Activated naive CD4-positive, alpha-beta T cell treated with anti-CD3 and anti-CD28 coated beads for 36 hours (primary cell): ENCODE measurements at regions of chr5 and their contacts with region 1.

Region 1: DNA sequence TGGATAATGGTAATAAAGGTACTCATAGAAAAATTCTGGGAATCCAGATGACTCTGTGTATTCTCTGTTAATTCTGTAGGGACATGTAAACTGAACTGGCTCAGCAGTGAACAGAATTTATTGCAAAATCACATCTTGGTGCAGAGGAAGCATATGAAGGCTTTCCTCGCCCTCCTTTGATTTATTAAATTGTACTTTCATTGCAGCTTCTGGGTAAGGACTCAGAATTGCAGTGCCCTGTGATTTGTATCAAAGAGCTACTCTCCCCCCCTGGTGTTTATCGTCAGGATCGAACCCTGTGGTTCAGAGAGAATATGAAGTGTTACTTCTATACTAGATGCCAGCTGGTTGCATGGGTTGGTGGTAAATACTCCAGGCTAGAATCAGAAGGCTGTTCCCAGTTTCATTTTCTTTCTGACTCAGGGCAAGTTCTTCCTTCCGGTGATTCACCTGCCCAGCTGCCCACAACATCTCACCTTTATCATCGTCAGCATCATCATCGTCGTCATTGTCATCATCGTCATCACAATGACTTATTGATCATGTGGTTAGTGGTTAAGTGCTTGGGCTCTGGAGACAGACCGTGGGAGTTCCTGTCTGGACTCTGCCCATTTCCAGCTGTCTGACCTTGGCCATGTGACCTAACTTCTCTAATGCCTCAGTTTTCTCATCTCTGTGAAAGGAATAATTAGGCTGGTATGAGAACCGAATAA is 238.8 kb downstream of the ARHGAP26 start:
- DNase-seq: peak; percentile 95
- H3K4me3 Mint-ChIP-seq: no peak overlapping the region
- H3K27ac Mint-ChIP-seq: peak overlapping the region; percentile 85
- H3K4me1 Mint-ChIP-seq: peaks cover 56% of the 10 kb centered on the region
- H3K27me3 Mint-ChIP-seq: no peaks in the 10 kb centered on the region

Region 2: DNA sequence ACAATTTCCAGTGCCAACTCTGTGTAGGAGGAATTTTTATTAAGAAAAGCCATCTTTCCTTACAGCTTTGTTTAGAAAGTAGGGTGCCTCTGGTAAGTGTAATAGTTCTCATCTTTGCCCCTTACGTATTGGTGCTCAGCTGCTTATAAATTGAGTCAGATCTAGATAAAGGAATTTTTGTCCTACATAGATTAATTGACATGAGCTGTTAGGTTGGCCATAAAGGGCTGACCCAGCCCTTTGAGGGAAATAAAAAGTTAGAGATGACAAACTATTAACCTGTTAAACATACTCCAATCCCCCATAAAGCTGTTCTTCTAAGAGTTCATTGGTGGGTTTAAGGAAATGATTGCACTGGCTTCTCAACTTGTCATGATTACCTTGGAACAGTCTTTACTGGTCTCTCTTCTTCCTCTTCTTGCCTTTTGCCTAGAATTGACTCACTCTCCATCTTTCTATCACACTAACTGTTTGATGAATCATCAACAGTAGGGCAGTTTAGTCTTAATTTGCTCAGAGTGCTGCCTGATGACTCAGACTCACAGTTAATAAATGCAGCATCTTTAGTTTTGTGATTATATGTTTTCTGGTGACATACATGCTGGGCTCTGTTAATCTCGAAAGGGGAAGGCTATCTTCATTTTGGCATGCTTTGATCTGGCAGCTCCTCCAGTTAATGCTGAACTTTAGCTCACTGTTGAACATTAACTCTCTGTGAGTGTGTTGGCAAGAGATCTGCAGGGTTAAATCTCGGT is 187.1 kb before region 1 on chr5:
- CTCF ChIA-PET with region 1: no interaction called
- intact Hi-C with region 1: loop called (anchors 1 kb)
- DNase-seq: peak; percentile 49
- H3K4me3 Mint-ChIP-seq: no peak overlapping the region
- H3K27ac Mint-ChIP-seq: peak overlapping the region; percentile 54
- H3K4me1 Mint-ChIP-seq: peaks cover 78% of the 10 kb centered on the region
- H3K27me3 Mint-ChIP-seq: no peaks in the 10 kb centered on the region

Region 3: GRCh38 chr5:143033535-143034250 is 24.7 kb after region 1 on chr5:
- CTCF ChIA-PET with region 1: no interaction called
- intact Hi-C with region 1: loop called (anchors 1 kb)
- DNase-seq: no peak
- H3K4me3 Mint-ChIP-seq: no peak overlapping the region
- H3K27ac Mint-ChIP-seq: no peak overlapping the region
- H3K4me1 Mint-ChIP-seq: peaks cover 75% of the 10 kb centered on the region
- H3K27me3 Mint-ChIP-seq: no peaks in the 10 kb centered on the region

Region 4: DNA sequence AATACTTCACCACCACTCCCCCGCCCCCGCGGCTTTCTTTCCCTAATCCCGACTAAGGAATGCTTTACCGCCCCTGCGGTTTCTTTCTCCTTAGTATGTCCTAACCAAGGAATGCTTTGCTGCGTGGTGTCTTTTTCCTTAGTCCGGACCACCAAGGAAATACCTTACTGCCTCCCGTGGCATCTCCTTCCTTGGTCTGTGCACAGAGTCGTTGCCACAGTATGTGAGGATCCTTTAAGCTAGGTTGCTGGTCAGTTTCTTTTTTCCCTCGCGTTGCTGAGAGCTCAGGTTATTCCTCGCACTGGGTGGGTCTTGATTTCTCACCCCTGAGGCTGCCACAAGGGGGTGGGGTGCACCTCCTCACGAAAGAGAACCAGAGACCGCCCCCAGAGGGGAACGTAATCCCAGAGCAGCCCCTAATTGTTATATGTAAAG is 85.1 kb after region 1 on chr5:
- CTCF ChIA-PET with region 1: no interaction called
- intact Hi-C with region 1: no loop called
- DNase-seq: no peak
- H3K4me3 Mint-ChIP-seq: no peak overlapping the region
- H3K27ac Mint-ChIP-seq: no peak overlapping the region
- H3K4me1 Mint-ChIP-seq: peaks cover 16% of the 10 kb centered on the region
- H3K27me3 Mint-ChIP-seq: no peaks in the 10 kb centered on the region

Region 5: DNA sequence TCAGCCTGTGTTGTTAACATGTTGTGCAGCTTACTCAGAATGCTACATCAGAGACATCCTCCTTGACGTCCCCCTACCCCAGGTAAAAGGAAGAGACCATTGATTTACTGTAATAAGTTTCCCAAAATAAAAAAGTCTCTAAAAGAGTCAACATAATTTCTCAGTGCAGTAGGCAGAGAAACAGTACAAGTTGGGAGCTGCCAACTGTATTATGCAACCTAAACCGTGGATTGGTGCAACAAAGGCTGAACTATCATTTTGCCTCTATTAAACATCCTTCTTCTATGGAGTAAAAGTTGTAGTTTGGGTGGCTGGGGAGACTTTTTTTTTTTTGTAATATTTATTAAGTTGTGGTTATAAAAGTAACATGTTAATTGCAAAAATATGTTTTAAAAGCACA is 186.5 kb after region 1 on chr5:
- CTCF ChIA-PET with region 1: no interaction called
- intact Hi-C with region 1: no loop called
- DNase-seq: no peak
- H3K4me3 Mint-ChIP-seq: no peak overlapping the region
- H3K27ac Mint-ChIP-seq: no peak overlapping the region
- H3K4me1 Mint-ChIP-seq: peaks cover 15% of the 10 kb centered on the region
- H3K27me3 Mint-ChIP-seq: no peaks in the 10 kb centered on the region

Region 6: DNA sequence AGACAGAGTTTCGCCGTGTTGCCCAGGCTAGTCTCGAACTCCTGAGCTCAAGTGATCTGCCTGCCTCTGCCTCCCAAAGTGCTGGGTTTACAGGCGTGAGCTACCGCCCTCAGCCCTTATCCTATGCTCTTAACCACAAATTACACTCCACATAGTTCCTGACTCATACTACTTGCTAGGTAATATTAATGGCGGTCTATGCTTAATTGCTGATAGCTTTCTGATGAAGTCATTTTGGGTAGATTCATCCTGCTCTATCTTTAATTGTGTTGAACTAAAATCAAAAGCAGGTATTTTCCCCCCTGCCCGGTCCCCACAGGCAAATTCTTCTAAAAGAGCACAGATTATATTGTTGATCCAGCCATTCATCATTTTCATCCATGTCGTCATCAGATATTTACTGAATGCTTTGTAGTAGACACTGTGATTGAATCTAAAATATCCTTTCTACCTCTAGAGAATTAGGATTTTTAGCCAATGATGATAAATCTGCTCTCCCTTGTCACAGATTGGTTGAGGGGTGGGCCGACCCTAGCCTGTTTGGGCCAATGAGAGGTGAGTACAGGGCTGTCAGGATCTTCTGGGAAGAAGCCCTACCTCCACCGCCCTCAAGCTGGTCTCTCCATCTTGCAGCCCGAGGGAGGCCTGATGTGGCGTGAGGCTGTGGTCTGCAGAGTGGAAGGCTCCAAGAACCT is 249.7 kb after region 1 on chr5:
- CTCF ChIA-PET with region 1: no interaction called
- intact Hi-C with region 1: no loop called
- DNase-seq: no peak
- H3K4me3 Mint-ChIP-seq: no peak overlapping the region
- H3K27ac Mint-ChIP-seq: no peak overlapping the region
- H3K4me1 Mint-ChIP-seq: peaks cover 11% of the 10 kb centered on the region
- H3K27me3 Mint-ChIP-seq: no peaks in the 10 kb centered on the region

Region 7: DNA sequence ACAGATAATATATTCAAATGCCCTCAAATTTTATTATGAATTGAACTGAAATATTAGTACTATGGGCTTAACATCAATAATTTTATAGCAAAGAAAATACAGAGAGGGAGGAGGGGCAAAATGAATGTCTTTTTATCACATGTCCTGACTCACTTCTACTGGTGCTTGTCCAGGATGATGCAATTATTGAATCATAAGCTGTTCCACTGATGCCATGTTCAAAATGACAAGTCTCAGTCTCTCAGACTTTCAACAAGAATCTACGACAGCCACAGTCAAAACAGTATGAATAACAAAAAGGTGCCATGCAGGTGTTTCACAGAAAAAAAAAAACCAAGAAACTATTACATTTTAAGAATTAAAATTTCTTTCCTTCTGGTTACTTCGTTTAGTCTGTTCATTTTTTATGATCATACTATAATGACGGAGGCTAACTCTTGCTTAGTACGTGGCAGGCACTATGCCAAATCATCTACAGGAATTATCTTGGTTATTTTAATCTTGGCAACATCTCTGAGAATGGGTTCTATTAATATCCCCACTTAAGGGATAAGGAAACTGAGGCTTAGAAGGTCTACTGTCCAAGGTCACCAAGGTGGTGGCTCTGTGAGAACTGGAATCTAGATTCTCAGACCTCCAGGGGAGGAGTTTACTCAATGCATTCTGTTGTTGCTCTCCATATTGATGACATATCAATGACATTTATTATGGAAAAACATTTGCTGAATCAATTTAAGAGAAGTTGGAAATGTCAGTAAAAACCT is 333.0 kb after region 1 on chr5:
- CTCF ChIA-PET with region 1: no interaction called
- intact Hi-C with region 1: loop called (anchors 1 kb)
- DNase-seq: peak; percentile 21
- H3K4me3 Mint-ChIP-seq: peak overlapping the region; percentile 6
- H3K27ac Mint-ChIP-seq: peak overlapping the region; percentile 72
- H3K4me1 Mint-ChIP-seq: peaks cover 51% of the 10 kb centered on the region
- H3K27me3 Mint-ChIP-seq: no peaks in the 10 kb centered on the region

Region 8: DNA sequence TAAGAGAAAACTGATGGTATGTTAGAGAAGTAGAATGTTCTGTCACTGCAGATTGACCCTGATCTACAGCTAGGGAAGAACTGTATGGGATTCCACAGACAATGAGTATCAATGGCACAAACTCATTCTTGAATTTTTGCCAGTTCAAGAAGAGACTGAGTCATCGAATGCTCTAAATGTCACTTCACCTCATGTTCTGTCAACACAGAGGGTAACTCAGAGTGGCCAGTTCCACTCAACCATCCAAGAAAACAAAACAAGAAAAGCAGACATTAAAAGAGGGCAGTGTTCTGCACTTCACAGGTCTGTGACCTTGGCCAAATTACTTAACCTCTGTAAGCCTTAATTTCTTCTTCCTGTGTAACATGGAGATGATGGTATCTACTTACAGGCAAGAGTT is 670.8 kb after region 1 on chr5:
- CTCF ChIA-PET with region 1: no interaction called
- intact Hi-C with region 1: loop called (anchors 1 kb)
- DNase-seq: no peak
- H3K4me3 Mint-ChIP-seq: no peak overlapping the region
- H3K27ac Mint-ChIP-seq: no peak overlapping the region
- H3K4me1 Mint-ChIP-seq: peaks cover 22% of the 10 kb centered on the region
- H3K27me3 Mint-ChIP-seq: peaks cover 5% of the 10 kb centered on the region